Endothelial cell of umbilical vein (primary cell): ENCODE measurements at regions of chr11 and their contacts with region 1.

Region 1: DNA sequence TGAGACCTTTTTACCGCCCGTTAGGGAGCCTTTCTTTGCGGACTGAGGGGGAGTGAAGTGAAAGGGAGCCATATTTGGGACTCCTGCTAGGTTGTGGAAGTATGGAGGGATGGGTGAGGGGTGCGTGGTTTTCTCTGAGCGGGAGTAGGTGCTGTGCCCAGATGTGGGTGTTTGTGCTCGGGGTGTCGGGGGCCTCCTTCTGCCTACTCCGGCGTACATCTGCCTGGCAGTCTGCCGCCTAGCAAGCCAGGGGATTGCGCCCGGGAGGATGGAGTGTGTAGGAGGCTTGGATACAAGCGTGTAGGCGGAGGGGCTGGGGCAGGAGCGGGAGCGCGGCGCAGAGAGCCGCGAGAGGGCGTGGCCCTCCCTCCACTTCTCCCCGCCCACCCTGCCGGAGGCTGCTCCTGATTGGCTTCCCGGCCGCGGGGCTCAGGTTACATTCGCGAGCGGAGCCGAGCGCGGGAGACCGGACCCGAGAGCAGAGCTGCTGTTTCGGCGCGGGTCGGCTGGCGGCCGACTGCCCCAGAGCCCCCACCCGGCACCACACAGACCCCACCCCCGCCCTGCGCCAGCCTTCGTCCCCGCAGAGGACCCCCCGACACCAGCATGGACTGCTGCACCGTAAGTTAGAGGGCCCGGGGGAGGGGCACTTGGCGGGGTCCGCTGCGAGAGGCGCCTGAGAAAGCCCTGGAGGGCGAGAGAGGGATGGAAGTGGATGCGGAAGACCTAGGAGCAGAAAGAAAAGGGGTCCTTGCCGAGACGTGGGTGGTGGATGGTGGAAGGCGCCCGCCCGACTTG is at the start of gene NRGN:
- DNase-seq: peak; percentile 92
- H3K4me3 ChIP-seq: peak within 1 kb of the TSS; percentile 63 to 80 (median 69)
- H3K27ac ChIP-seq: no peak within 1 kb of the TSS
- H3K4me1 ChIP-seq: peaks cover 13% of the 10 kb centered on the region
- H3K27me3 ChIP-seq: peaks cover 3 to 5% of the 10 kb centered on the region in 2 experiments
- CTCF ChIP-seq: no peak
- POLR2A ChIP-seq: peak; percentile 53
- total RNA-seq, gene NRGN: 30.9 and 33.5 TPM in 2 replicates

Region 2: DNA sequence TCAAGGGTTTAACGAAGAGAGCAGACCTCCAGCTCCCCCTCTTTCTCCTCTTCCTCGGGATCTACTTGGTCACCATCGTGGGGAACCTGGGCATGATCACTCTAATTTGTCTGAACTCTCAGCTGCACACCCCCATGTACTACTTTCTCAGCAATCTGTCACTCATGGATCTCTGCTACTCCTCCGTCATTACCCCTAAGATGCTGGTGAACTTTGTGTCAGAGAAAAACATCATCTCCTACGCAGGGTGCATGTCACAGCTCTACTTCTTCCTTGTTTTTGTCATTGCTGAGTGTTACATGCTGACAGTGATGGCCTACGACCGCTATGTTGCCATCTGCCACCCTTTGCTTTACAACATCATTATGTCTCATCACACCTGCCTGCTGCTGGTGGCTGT is 169.5 kb before region 1 on chr11:
- CTCF ChIA-PET with region 1: no interaction called
- POLR2A ChIA-PET with region 1: no interaction called
- dilution Hi-C with region 1: no loop called
- intact Hi-C with region 1: no loop called
- DNase-seq: no peak
- H3K4me3 ChIP-seq: no peak overlapping the region
- H3K27ac ChIP-seq: no peak overlapping the region
- H3K4me1 ChIP-seq: no peaks in the 10 kb centered on the region
- H3K27me3 ChIP-seq: peaks cover 0 to 3% of the 10 kb centered on the region in 2 experiments
- CTCF ChIP-seq: no peak
- POLR2A ChIP-seq: no peak

Region 3: GRCh38 chr11:124707829-124708228 is 31.8 kb before region 1 on chr11:
- CTCF ChIA-PET with region 1: no interaction called
- POLR2A ChIA-PET with region 1: no interaction called
- dilution Hi-C with region 1: no loop called
- intact Hi-C with region 1: no loop called
- DNase-seq: no peak
- H3K4me3 ChIP-seq: no peak overlapping the region
- H3K27ac ChIP-seq: no peak overlapping the region
- H3K4me1 ChIP-seq: no peaks in the 10 kb centered on the region
- H3K27me3 ChIP-seq: no peaks in the 10 kb centered on the region
- CTCF ChIP-seq: no peak
- POLR2A ChIP-seq: no peak

Region 4: DNA sequence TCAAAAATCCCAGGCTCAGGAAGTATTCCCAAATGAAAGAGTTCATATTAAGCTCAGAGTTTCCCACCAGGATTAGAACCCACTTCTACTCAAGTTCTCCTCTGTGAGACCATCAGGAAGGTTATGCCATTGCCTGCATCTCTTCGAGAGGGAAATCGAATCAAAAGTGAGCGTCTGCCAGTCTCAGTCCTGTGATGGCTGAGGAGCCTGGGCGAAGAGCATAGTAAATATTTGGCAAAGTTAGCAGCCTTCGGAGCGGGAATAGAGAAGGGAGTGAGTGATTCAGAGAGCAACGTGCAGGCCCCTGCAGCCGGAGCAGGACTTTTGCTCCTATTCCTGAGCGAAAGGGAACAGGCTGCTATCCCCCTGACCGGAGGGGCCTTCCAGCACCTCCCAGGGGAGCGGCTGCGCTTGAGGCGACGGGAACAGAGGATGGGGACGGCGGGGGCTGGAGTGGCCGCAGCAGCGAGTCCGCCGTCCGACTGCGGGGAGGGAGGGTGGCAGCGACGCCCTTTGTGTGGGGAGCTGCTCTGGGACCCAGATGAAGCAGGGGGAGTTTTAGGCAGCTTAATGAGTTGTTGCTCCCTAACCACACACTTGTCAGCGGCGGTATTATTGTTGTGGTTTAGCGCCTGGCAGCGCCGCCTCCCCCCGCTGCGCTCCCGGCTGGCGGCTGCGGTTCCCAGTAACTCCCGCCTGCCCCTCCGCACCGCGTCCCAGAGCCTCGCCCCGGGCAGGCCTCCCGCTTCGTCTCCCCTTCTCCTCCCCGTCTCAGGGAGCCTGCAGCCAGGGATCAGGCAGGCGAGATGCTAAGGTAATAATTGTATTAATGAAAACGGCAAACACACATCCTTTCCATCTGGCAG is 21.7 kb before region 1 on chr11:
- CTCF ChIA-PET with region 1: interaction called, 24 read pairs
- POLR2A ChIA-PET with region 1: no interaction called
- dilution Hi-C with region 1: no loop called
- intact Hi-C with region 1: no loop called
- DNase-seq: peak; percentile 78
- H3K4me3 ChIP-seq: peak overlapping the region; percentile 26 to 61 (median 39)
- H3K27ac ChIP-seq: peak overlapping the region; percentile 62
- H3K4me1 ChIP-seq: peaks cover 24% of the 10 kb centered on the region
- H3K27me3 ChIP-seq: no peaks in the 10 kb centered on the region
- CTCF ChIP-seq: no peak
- POLR2A ChIP-seq: peak; percentile 11

Region 5: DNA sequence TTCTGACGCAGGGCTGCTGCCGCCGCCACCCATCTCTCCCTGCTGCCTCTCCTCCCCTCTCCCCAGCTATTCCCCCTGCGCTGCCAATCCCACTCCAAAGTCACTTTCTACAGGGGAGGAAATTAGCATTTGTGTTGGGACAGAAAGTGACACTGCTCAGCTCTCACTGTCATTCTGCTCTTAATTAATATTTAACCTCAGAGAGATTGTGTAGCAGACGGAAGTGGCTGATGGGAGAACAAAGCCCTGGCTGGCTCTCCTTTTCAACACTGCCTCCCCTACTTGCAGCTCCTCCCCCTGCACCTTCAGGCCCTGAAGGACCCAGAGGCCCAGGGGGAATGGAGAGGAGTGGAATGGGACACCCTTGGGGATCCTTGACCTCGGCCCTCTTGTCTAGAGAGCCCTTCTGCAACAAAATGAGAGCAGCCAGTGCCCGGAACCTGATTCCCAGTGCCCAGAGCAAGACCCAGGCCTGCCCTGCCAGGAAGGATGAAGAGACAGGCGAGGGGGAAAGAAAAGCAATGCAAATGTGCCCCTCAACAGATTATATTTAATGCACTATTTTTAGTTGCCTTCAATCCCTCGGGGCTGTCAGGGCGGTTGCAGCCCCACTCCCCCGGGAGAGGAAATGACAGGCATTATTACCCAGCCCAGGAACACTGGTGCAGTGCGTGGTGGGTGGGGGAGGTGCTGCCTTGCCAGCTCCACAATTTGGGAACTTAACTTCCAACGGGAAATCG is 14.5 kb before region 1 on chr11:
- CTCF ChIA-PET with region 1: interaction called, 6 read pairs
- POLR2A ChIA-PET with region 1: no interaction called
- dilution Hi-C with region 1: no loop called
- intact Hi-C with region 1: loop called (anchors 1 kb)
- DNase-seq: no peak
- H3K4me3 ChIP-seq: peak overlapping the region in 1 of 3 experiments; percentile 9
- H3K27ac ChIP-seq: peak overlapping the region; percentile 77
- H3K4me1 ChIP-seq: peaks cover 24% of the 10 kb centered on the region
- H3K27me3 ChIP-seq: no peaks in the 10 kb centered on the region
- CTCF ChIP-seq: no peak
- POLR2A ChIP-seq: no peak